CD8-positive, alpha-beta T cell (primary cell): ENCODE measurements at regions of chr15 and their contacts with region 1.

Region 1: DNA sequence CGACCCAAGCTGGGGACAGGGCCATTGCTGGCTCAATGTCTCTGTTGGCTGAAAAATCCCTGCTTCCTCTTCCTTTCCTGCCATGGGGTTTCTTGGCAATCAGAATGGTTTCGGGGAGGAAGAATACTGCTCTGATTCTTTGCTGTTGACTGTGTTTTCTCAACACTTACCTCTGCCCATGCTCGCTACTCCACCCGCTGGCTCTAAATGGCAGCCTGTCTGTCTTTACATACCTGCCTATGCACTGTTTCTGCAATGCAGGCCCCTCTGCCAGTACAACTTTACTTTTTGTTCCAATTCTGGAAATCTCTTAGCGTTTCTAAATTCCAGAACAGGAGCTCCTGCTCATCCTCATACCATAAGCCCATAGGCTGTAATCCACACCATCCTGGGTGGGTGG is 38.4 kb upstream of the SNRPA1 start:
- DNase-seq: peak in 2 of 9 experiments; percentile 30 to 42
- ATAC-seq: peak; percentile 21
- H3K4me3 ChIP-seq: peak overlapping the region in 1 of 2 experiments; percentile 33
- H3K4me3 Mint-ChIP-seq: no peak overlapping the region
- H3K27ac ChIP-seq: peak overlapping the region; percentile 81 to 86
- H3K27ac Mint-ChIP-seq: peak overlapping the region; percentile 77
- H3K4me1 ChIP-seq: peaks cover 15% of the 10 kb centered on the region
- H3K4me1 Mint-ChIP-seq: peaks cover 25% of the 10 kb centered on the region
- H3K27me3 ChIP-seq: no peaks in the 10 kb centered on the region
- H3K27me3 Mint-ChIP-seq: no peaks in the 10 kb centered on the region
- CTCF ChIP-seq: no peak

Region 2: DNA sequence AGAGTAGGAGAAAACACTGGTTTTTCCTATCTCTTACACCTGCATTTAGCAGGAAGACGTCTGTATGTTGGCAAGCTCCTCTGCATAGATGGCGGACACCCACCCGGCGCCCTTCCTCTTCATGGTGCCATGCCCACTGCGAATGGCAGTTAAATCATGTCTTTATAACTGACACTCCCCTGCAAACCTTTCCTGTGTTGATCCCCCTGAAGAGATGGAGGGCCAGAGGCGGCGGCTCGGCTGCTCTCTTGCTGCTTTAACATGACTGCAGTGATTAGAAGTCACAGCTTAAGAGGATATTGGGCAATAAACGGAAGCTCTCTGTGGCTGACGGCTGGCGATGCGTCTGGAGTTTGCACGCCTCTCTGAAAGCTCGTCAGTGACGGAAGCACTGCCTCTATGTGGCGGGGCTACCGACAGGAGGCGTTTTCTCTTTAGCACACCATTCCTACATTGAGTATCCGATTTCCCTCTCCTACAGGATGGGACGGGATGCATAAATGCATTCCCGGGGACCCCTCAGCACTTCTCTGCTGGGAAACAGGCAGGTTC is 12.8 kb before region 1 on chr15:
- CTCF ChIA-PET with region 1: interaction called, 31 read pairs
- POLR2A ChIA-PET with region 1: interaction called, 15 read pairs
- intact Hi-C with region 1: no loop called
- DNase-seq: peak; percentile 29 to 88 (median 63)
- ATAC-seq: peak; percentile 98
- H3K4me3 ChIP-seq: peak overlapping the region; percentile 45 to 46
- H3K4me3 Mint-ChIP-seq: peak overlapping the region; percentile 78
- H3K27ac ChIP-seq: peak overlapping the region; percentile 46 to 85
- H3K27ac Mint-ChIP-seq: peak overlapping the region; percentile 93
- H3K4me1 ChIP-seq: peaks cover 10% of the 10 kb centered on the region
- H3K4me1 Mint-ChIP-seq: peaks cover 13% of the 10 kb centered on the region
- H3K27me3 ChIP-seq: no peaks in the 10 kb centered on the region
- H3K27me3 Mint-ChIP-seq: peaks cover 5% of the 10 kb centered on the region
- CTCF ChIP-seq: peak; percentile 57